ENCODE measurements at regions of chr19 and their contacts with region 1.

Region 1: GRCh38 chr19:19404879-19405860 is at the start of gene GATAD2A:
- DNase-seq: peak; percentile 88
- H3K4me3 Mint-ChIP-seq: peak within 1 kb of the TSS; percentile 99
- H3K27ac Mint-ChIP-seq: peak within 1 kb of the TSS; percentile 97
- H3K4me1 Mint-ChIP-seq: peaks cover 60% of the 10 kb centered on the region
- H3K27me3 Mint-ChIP-seq: no peaks in the 10 kb centered on the region
- total RNA-seq, gene GATAD2A: 139 and 142 TPM in 2 replicates

Region 2: GRCh38 chr19:18776288-18776594 is 628.9 kb before region 1 on chr19:
- intact Hi-C with region 1: no loop called
- DNase-seq: no peak
- H3K4me3 Mint-ChIP-seq: no peak overlapping the region
- H3K27ac Mint-ChIP-seq: no peak overlapping the region
- H3K4me1 Mint-ChIP-seq: no peaks in the 10 kb centered on the region
- H3K27me3 Mint-ChIP-seq: peaks cover 3% of the 10 kb centered on the region

Region 3: DNA sequence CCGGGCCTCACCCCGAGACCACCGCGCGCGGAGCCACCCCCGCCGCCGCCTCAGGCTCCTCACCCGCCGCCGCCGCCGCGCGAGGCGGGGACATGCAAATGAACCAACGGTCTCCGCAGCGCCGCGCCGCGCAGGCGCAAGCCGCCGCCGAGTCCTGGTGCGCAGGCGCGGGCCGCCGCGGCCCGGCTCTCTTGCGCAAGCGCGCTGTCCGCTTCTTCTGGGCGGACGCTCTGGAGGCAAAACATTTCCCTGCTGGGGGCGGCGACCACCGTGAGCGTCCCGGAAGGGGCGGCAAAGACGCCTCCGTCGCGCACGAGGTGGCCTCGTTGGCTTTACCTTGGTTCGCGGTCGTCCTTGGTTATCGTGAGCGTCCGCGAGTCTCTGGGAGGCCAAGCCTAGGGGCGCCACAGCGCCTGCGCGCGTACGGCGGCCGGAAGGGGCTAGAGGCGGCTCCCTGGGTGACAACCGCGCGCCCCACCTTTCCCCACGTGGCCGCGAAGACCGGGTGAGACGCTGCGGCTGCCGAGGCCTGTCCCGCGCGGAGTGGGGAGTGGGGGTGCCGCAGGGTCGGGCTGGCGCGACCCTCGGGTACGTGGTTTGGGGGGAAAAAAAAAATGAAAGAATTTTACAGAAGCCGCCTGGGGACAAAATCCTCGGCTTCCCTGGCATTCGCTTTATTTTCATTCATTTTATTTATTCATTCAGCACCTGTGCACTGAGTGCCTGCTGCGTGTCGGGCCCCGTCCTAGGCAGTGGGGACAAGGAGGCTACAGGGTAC is 371.6 kb before region 1 on chr19 and contains the starts of genes ARMC6 and SUGP2:
- intact Hi-C with region 1: loop called (anchors 5 kb)
- DNase-seq: peak; percentile 89
- H3K4me3 Mint-ChIP-seq: peak within 1 kb of the TSS; percentile 98
- H3K27ac Mint-ChIP-seq: peak within 1 kb of the TSS; percentile 98
- H3K4me1 Mint-ChIP-seq: peaks cover 25% of the 10 kb centered on the region
- H3K27me3 Mint-ChIP-seq: no peaks in the 10 kb centered on the region
- total RNA-seq, gene ARMC6: 54.9 and 56.5 TPM in 2 replicates
- total RNA-seq, gene SUGP2: 114 and 128 TPM in 2 replicates

Region 4: DNA sequence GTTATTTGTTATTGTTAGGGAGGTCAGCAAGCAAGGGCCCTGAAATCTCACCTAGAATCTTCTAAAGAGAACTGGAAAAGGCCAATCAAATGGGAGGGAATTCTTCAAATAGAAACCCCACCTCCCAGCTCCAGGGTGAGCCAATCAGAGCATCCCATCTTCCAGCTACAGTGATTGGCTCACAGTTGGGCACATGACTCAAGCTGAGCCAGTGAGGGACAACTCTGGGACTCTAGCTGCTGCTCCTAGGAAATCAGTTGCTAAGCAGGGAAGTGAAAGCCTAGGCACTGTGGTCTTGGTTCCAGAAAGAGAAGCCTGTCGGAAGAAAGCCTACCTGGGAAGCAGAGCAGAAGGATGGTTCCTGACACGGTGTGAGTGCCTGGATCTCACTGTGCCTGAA is 145.4 kb before region 1 on chr19:
- intact Hi-C with region 1: no loop called
- DNase-seq: no peak
- H3K4me3 Mint-ChIP-seq: no peak overlapping the region
- H3K27ac Mint-ChIP-seq: no peak overlapping the region
- H3K4me1 Mint-ChIP-seq: no peaks in the 10 kb centered on the region
- H3K27me3 Mint-ChIP-seq: peaks cover 34% of the 10 kb centered on the region

Region 5: DNA sequence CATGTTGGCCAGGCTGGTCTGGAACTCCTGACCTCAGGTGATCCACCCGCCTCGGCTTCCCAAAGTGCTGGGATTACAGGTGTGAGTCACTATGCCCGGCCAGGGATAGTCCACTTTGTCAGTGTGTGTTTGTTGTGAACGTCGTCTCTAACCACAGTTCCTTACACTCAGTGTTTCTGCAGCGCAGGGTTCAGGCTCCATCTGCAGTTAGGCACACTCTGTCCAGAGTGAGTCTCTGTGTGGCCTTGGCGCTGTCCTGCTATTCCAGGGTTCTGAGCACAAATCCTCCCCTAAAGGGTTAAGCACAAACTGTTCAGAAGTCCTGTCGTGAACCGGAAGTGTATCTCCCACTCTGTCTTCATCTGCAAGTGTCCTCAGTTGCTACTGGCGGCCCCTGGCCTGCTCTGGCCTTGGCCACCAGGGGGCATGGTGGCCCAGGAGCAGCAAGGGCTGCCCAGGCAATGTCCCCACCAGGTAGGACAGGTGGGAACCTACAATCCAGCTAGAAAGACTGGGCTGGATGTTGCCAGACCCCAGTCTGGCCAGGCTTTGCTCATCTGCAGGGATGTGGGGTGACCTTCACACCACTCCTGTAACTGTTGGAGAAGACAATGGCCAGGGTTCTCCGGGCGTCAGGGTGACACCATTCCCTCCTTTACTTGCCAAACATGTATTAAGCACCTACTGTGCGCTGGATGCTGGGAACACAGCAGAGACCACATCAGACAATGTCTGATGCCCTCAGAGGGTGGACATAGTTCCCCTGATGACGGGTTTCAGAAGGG is 38.4 kb before region 1 on chr19:
- intact Hi-C with region 1: loop called (anchors 1 kb)
- DNase-seq: peak; percentile 66
- H3K4me3 Mint-ChIP-seq: peak overlapping the region; percentile 55
- H3K27ac Mint-ChIP-seq: no peak overlapping the region
- H3K4me1 Mint-ChIP-seq: peaks cover 14% of the 10 kb centered on the region
- H3K27me3 Mint-ChIP-seq: no peaks in the 10 kb centered on the region

Region 6: GRCh38 chr19:19385108-19385899 is 19.9 kb before region 1 on chr19:
- intact Hi-C with region 1: loop called (anchors 1 kb)
- DNase-seq: peak; percentile 100
- H3K4me3 Mint-ChIP-seq: peak overlapping the region; percentile 87
- H3K27ac Mint-ChIP-seq: peak overlapping the region; percentile 92
- H3K4me1 Mint-ChIP-seq: peaks cover 45% of the 10 kb centered on the region
- H3K27me3 Mint-ChIP-seq: peaks cover 2% of the 10 kb centered on the region

Region 7: GRCh38 chr19:19444681-19445155 is 39.5 kb after region 1 on chr19:
- intact Hi-C with region 1: loop called (anchors 2 kb)
- DNase-seq: no peak
- H3K4me3 Mint-ChIP-seq: peak overlapping the region; percentile 28
- H3K27ac Mint-ChIP-seq: peak overlapping the region; percentile 73
- H3K4me1 Mint-ChIP-seq: peaks cover 60% of the 10 kb centered on the region
- H3K27me3 Mint-ChIP-seq: no peaks in the 10 kb centered on the region

Region 8: GRCh38 chr19:19459707-19460251 is 54.6 kb after region 1 on chr19:
- intact Hi-C with region 1: loop called (anchors 1 kb)
- DNase-seq: peak; percentile 53
- H3K4me3 Mint-ChIP-seq: peak overlapping the region; percentile 82
- H3K27ac Mint-ChIP-seq: peak overlapping the region; percentile 97
- H3K4me1 Mint-ChIP-seq: peaks cover 65% of the 10 kb centered on the region
- H3K27me3 Mint-ChIP-seq: no peaks in the 10 kb centered on the region

Region 9: GRCh38 chr19:19515764-19516519 is 110.8 kb after region 1 on chr19 and contains the start of gene NDUFA13:
- intact Hi-C with region 1: loop called (anchors 1 kb)
- DNase-seq: peak; percentile 93
- H3K4me3 Mint-ChIP-seq: peak within 1 kb of the TSS; percentile 92
- H3K27ac Mint-ChIP-seq: peak within 1 kb of the TSS; percentile 94
- H3K4me1 Mint-ChIP-seq: peaks cover 9% of the 10 kb centered on the region
- H3K27me3 Mint-ChIP-seq: no peaks in the 10 kb centered on the region
- total RNA-seq, gene NDUFA13: 408 and 410 TPM in 2 replicates

Region 10: DNA sequence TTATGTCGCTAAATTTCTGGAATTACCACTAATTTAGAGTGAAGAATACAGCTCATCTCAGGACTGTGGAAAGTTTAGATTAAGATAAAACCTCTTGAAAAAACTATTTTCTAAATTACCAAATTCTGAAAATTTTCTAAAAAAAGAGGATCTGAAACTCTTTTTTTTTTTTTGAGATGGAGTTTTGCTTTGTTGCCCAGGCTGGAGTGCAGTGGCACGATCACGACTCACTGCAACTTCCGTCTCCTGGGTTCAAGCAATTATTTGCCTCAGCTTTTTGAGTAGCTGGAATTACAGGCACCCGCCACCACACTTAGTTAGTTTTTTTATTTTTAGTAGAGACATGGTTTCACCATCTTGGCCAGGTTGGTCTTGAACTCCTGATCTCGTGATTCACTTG is 443.9 kb after region 1 on chr19:
- intact Hi-C with region 1: no loop called
- DNase-seq: no peak
- H3K4me3 Mint-ChIP-seq: no peak overlapping the region
- H3K27ac Mint-ChIP-seq: no peak overlapping the region
- H3K4me1 Mint-ChIP-seq: no peaks in the 10 kb centered on the region
- H3K27me3 Mint-ChIP-seq: no peaks in the 10 kb centered on the region